ENCODE measurements at regions of chr1 and their contacts with region 1.

Region 1: DNA sequence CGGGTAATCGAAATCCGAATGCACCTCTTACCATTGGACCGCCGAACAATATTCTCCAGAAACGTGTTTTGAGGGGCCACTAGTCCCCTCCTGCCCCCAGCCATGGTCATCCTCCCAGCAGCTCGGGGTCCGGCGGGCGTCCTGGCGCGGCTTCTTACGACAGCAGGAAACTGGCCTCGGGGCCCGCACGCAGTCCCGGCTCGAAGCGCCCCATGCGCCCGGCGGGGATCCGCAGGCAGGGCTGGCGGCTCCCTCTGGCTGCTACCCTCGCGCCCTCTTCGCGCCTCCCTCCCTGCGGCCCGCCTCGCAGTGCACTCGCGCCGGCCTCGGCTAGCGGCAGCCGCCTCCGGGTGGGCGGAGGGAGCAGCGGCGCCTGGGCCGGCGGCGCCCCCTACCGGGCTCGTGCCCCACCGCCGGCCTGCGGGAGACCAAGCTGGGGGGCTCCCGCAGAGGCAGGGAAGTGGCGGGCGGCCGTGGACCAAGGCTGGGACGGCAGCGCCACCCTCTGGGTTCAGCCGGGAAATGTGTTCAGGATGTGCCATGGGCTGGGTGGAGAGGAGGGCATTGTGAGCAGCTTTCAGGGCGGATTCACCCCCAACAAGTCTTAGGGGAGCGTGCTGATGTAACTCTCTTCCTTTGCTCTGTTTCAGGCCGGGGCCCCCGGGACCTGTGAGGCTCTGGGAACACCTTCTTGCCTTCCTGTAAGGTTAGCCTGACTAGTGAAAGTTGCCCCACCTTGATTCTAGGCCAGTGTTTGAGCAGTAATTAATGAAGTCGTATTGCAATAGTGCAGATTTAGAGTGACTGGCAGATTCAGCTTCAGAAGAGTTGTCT is at the start of gene KCNH1:
- DNase-seq: peak; percentile 92
- ATAC-seq: peak; percentile 92
- H3K4me3 Mint-ChIP-seq: peak within 1 kb of the TSS; percentile 69
- H3K27ac Mint-ChIP-seq: no peak within 1 kb of the TSS
- H3K4me1 Mint-ChIP-seq: peaks cover 10% of the 10 kb centered on the region
- H3K27me3 Mint-ChIP-seq: peaks cover 35% of the 10 kb centered on the region
- CTCF ChIP-seq: peak; percentile 96
- total RNA-seq, gene KCNH1: 0.11 to 0.21 TPM (median 0.17 TPM) in 3 replicates

Region 2: GRCh38 chr1:210373885-210374599 is 760.0 kb before region 1 on chr1:
- CTCF ChIA-PET with region 1: interaction called, 18 read pairs
- POLR2A ChIA-PET with region 1: no interaction called
- DNase-seq: peak; percentile 93
- ATAC-seq: peak; percentile 84
- H3K4me3 Mint-ChIP-seq: peak overlapping the region; percentile 52; the same call in 1 of the 2 replicates
- H3K27ac Mint-ChIP-seq: peak overlapping the region; percentile 98
- H3K4me1 Mint-ChIP-seq: peaks cover 55% of the 10 kb centered on the region
- H3K27me3 Mint-ChIP-seq: peaks cover 46% of the 10 kb centered on the region
- CTCF ChIP-seq: peak; percentile 91

Region 3: DNA sequence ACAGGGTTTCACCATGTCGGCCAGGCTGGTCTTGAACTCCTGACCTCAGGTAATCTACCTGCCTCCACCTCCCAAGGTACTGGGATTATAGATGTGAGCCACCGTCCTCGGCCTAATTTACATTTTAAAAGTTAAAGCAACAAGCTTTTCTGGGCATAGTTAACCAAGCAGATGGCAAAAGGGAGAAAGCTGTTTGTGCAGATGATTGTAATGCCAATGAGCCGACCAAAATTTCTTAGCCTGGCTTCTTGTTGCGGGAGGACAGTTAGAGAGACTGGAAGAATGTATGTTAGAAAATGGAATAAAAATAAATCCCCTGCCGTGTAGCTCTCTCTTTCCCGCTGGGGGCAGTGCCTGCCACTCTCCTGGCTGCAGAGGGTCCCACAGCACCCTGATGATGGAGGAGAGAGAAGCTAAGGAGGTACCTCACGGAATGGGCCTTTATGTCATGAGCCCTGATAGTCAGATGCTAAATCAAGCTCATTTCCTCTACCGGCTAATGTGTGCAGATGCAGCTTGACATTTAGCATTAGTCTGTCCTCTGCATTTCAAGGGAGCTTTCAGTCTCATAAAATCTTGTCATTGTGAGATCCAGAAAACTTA is 718.1 kb before region 1 on chr1:
- CTCF ChIA-PET with region 1: interaction called, 18 read pairs
- POLR2A ChIA-PET with region 1: no interaction called
- DNase-seq: no peak
- ATAC-seq: peak; percentile 91
- H3K4me3 Mint-ChIP-seq: no peak overlapping the region; the same call in 1 of the 2 replicates
- H3K27ac Mint-ChIP-seq: no peak overlapping the region
- H3K4me1 Mint-ChIP-seq: peaks cover 24% of the 10 kb centered on the region
- H3K27me3 Mint-ChIP-seq: peaks cover 4% of the 10 kb centered on the region; the same call in 1 of the 2 replicates
- CTCF ChIP-seq: no peak

Region 4: GRCh38 chr1:210584439-210585113 is 549.5 kb before region 1 on chr1:
- CTCF ChIA-PET with region 1: interaction called, 53 read pairs
- POLR2A ChIA-PET with region 1: no interaction called
- DNase-seq: peak; percentile 90
- ATAC-seq: peak; percentile 98
- H3K4me3 Mint-ChIP-seq: no peak overlapping the region
- H3K27ac Mint-ChIP-seq: no peak overlapping the region
- H3K4me1 Mint-ChIP-seq: 0 out of 2 replicates have a peak, but pooled peaks cover 4% of the 10 kb centered on the region
- H3K27me3 Mint-ChIP-seq: no peaks in the 10 kb centered on the region; the same call in 1 of the 2 replicates
- CTCF ChIP-seq: peak; percentile 68

Region 5: DNA sequence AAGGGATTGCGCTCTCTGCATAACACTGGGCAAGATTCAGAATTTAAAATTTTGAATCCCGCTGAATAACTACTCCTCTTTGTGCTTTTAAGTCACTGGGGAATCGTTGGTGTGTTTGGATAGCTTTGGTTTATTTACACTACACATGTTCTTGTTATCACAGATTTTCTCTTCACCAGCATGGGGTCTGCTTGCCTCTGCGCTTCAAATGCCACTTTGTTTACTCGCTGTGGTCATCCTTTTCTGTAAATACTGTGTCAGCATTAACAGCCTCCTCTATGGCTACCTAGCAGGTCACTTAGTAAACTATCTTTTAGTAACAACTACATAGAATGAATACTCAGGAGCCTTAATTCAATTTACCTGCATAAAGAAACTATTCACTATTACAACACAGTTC is 14.3 kb after region 1 on chr1:
- CTCF ChIA-PET with region 1: interaction called, 10 read pairs
- POLR2A ChIA-PET with region 1: no interaction called
- DNase-seq: no peak
- ATAC-seq: no peak
- H3K4me3 Mint-ChIP-seq: no peak overlapping the region
- H3K27ac Mint-ChIP-seq: no peak overlapping the region
- H3K4me1 Mint-ChIP-seq: peaks cover 8% of the 10 kb centered on the region
- H3K27me3 Mint-ChIP-seq: no peaks in the 10 kb centered on the region
- CTCF ChIP-seq: no peak